IMR-90 (cell line): ENCODE measurements at regions of chr9 and their contacts with region 1.

Region 1: DNA sequence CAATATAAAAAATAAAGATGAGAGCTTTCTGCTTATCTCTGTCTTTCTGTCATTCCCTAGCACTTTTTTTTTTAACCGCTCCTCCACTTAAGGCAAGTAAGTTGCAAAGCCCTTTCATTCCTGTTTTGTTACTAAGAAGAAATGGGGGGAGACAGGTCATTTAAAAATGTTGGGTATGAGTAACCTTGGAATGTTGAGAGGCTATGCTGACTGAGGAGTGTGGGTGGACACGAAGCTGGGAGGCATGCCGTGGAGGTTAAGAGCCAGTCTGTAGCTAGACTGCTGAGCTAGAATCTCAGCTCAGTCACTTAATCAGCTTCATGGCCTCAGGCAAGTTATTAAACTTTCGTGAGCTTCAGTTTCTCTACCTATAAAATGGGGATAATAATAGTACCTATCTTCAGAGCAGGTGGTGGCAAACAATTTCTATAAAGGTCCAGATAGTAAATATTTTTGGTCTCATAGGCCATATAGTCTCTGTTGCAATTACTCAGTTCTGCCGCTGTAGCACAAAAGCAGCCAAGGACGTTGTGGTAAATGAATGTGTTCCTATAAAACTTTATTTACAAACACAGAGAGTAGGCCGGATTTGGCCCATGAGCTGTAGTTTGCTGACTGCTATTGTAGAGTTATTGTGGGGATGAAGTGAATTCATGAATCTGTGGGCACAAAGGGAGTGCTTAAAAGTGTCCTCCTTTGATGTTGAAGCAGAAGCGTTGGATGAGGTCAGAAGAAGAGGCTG is 220.0 kb downstream of the GABBR2 start:
- DNase-seq: peak; percentile 98
- ATAC-seq: peak; percentile 96
- H3K4me3 ChIP-seq: no peak overlapping the region
- H3K27ac ChIP-seq: peak overlapping the region; percentile 82
- H3K4me1 ChIP-seq: peaks cover 25% of the 10 kb centered on the region
- H3K27me3 ChIP-seq: no peaks in the 10 kb centered on the region
- CTCF ChIP-seq: peak; percentile 28; the same call in 1 of the 2 replicates
- POLR2A ChIP-seq: peak; percentile 38; the same call in 1 of the 2 replicates
- RAD21 ChIP-seq: no peak

Region 2: DNA sequence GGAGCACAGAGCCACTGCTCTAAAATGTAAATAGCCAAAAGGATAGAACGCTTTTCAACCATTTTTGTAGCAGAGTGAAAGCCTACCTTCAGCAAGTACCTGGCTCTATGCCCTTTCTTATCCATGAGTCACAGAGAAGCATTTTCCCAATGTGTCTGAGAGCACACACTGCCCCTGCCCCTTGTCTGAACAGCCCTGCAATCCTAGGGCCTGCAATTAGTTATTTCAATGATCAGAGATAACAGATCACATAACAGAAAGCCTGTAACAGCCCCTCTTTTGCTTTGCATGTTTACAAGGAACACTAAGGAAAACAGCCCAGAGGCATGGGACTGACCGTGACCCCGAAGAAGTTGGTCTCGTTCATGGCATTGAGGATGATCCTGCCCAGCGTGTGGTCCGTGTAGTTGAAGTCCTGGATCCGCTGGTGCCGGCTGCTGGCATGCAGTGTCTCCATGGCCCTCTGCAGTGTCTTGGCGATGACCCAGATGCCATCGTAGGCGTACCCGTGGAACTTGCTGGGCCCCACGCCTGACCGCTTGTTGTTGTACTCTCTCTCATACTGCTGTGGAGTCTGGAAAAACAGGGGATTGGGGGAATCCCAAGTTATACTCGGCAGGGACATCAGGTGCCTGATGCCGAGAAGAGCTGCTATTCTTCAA is 35.0 kb before region 1 on chr9:
- CTCF ChIA-PET with region 1: no interaction called
- POLR2A ChIA-PET with region 1: no interaction called
- dilution Hi-C with region 1: no loop called
- in situ Hi-C with region 1: no loop called
- intact Hi-C with region 1: loop called (anchors 1 kb)
- DNase-seq: peak; percentile 50
- ATAC-seq: 0 out of 2 replicates have a peak, but pooled peaks have one; percentile 21
- H3K4me3 ChIP-seq: no peak overlapping the region
- H3K27ac ChIP-seq: no peak overlapping the region
- H3K4me1 ChIP-seq: peaks cover 5% of the 10 kb centered on the region
- H3K27me3 ChIP-seq: no peaks in the 10 kb centered on the region; the same call in 1 of the 2 replicates
- CTCF ChIP-seq: no peak
- POLR2A ChIP-seq: no peak
- RAD21 ChIP-seq: no peak

Region 3: GRCh38 chr9:98607787-98608186 is 119.0 kb after region 1 on chr9:
- CTCF ChIA-PET with region 1: interaction called, 3 read pairs
- POLR2A ChIA-PET with region 1: no interaction called
- dilution Hi-C with region 1: no loop called
- in situ Hi-C with region 1: no loop called
- intact Hi-C with region 1: loop called (anchors 5 kb)
- DNase-seq: peak; percentile 97
- ATAC-seq: peak; percentile 55
- H3K4me3 ChIP-seq: no peak overlapping the region
- H3K27ac ChIP-seq: peak overlapping the region; percentile 74
- H3K4me1 ChIP-seq: peaks cover 51% of the 10 kb centered on the region
- H3K27me3 ChIP-seq: no peaks in the 10 kb centered on the region
- CTCF ChIP-seq: no peak
- POLR2A ChIP-seq: peak; percentile 33; the same call in 1 of the 2 replicates
- RAD21 ChIP-seq: no peak; the same call in 1 of the 2 replicates

Region 4: GRCh38 chr9:98775831-98776441 is 287.2 kb after region 1 on chr9:
- CTCF ChIA-PET with region 1: interaction called, 5 read pairs
- POLR2A ChIA-PET with region 1: no interaction called
- dilution Hi-C with region 1: no loop called
- in situ Hi-C with region 1: no loop called
- intact Hi-C with region 1: loop called (anchors 5 kb)
- DNase-seq: peak; percentile 79
- ATAC-seq: peak; percentile 79
- H3K4me3 ChIP-seq: no peak overlapping the region
- H3K27ac ChIP-seq: no peak overlapping the region
- H3K4me1 ChIP-seq: 0 out of 2 replicates have a peak, but pooled peaks cover 1% of the 10 kb centered on the region
- H3K27me3 ChIP-seq: no peaks in the 10 kb centered on the region
- CTCF ChIP-seq: peak; percentile 86
- POLR2A ChIP-seq: no peak
- RAD21 ChIP-seq: peak; percentile 90